Gastrocnemius medialis (tissue), 4 donors: ENCODE measurements at regions of chr17 and their contacts with region 1.

Region 1: DNA sequence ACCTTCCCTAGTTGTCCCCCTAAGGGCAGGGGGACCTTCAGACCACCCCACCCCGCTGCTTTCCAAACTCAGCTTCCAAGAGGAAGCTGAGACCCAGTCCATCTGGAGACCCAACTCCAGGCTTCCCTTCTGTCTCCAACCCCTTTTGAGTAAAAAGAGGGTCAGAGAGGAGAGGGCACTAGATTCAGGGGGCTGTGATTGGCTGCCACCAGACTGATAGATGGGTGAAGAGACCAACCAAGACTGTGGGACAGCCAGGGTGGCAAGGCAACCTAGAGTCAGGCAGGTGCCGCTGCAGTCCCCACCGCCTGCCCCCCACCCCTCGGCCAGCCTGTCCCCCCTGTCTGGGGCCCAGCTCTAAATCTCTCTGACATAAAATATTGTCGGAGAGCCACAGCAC is 92.5 kb downstream of the SDK2 start:
- DNase-seq: no peak
- ATAC-seq: no peak
- H3K4me3 ChIP-seq: no peak overlapping the region
- H3K27ac ChIP-seq: no peak overlapping the region
- H3K4me1 ChIP-seq: no peaks in the 10 kb centered on the region
- H3K27me3 ChIP-seq: peaks cover 0 to 6% (median 0%) of the 10 kb centered on the region in 3 donors
- CTCF ChIP-seq: no peak
- POLR2A ChIP-seq: no peak

Region 2: GRCh38 chr17:73492821-73493814 is 58.6 kb before region 1 on chr17:
- in situ Hi-C with region 1: loop called in 1 of 4 experiments (anchors 10 kb)
- intact Hi-C with region 1: no loop called
- DNase-seq: no peak
- ATAC-seq: no peak
- H3K4me3 ChIP-seq: no peak overlapping the region
- H3K27ac ChIP-seq: no peak overlapping the region
- H3K4me1 ChIP-seq: no peaks in the 10 kb centered on the region
- H3K27me3 ChIP-seq: no peaks in the 10 kb centered on the region
- CTCF ChIP-seq: no peak
- POLR2A ChIP-seq: no peak